ENCODE measurements at regions of chr20 and their contacts with region 1.

Region 1: DNA sequence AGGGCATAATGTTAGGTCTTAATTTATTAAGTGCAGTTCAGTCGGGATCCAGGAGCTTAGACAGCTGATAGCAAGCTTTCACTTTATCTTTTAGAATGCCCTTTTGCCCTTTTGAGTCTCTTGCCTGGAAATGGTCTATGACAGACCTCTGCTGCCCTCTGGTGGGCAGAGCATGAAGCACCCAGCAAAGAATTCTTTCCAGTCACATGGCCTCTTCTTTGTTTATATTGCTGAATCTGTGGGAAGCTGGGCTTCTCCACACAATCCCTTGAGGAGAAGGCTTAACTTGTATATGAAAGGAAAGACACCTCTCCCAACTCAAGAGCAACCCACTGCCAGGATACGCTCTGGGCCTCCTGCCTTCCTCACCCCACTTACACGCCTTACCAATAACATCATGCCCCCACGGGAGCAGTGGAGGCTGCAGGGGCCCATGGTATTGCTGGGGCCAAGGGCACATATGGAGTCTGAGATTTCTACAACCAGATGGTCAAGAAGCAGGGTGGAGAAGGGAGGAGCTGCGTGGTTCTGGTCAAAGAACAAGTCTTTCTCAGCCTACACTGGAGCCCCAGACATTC is 20.4 kb downstream of the WFDC3 start:
- DNase-seq: peak; percentile 91

Region 2: GRCh38 chr20:45311589-45312211 is 459.6 kb before region 1 on chr20:
- in situ Hi-C with region 1: loop called (anchors 25 kb)
- DNase-seq: peak; percentile 77

Region 3: GRCh38 chr20:45564760-45565276 is 206.5 kb before region 1 on chr20:
- in situ Hi-C with region 1: no loop called
- DNase-seq: no peak

Region 4: DNA sequence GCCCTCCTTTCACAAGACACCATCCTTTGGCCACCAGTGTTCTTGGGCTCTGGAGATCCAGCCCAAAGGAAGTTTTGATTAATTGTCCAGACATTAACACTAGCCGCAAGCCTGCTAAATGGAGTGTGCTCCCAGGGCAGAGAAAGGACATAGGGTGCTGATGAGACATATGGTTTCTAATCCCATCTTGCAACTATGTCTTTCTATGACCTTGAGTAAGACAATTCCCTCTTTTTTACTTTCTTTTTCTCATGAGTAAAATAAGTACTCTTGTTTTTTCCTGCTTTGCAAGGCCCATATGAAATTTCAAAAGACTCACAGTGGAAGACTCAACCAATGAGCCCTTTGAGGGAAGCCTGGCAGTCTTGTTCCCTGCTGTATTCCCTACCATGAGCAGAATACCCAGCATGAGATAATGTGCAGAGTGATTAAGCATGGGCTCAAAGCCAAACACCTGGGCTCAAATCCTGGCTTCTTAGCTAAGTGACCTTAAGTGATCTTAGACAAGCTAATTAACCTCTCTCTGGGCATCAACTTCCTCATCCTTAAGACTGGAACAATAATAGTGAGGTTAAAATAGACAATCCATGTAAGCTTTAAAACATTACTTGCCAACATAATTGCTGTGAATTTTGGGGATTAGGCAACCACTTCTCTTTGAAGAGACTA is 66.2 kb before region 1 on chr20 and contains the start of gene WFDC10B:
- in situ Hi-C with region 1: loop called (anchors 10 kb)
- DNase-seq: no peak
- total RNA-seq, gene WFDC10B: not detected in 2 replicates